Activated naive CD4-positive, alpha-beta T cell treated with anti-CD3 and anti-CD28 coated beads for 36 hours (primary cell): ENCODE measurements at regions of chr6 and their contacts with region 1.

Region 1: GRCh38 chr6:142146828-142147662 is at the starts of genes NMBR and VTA1:
- DNase-seq: peak; percentile 98
- H3K4me3 Mint-ChIP-seq: peak within 1 kb of the TSS; percentile 93
- H3K27ac Mint-ChIP-seq: peak within 1 kb of the TSS; percentile 91
- H3K4me1 Mint-ChIP-seq: peaks cover 53% of the 10 kb centered on the region
- H3K27me3 Mint-ChIP-seq: no peaks in the 10 kb centered on the region
- total RNA-seq, gene NMBR: not detected
- total RNA-seq, gene VTA1: 54.7 to 57.3 TPM

Region 2: DNA sequence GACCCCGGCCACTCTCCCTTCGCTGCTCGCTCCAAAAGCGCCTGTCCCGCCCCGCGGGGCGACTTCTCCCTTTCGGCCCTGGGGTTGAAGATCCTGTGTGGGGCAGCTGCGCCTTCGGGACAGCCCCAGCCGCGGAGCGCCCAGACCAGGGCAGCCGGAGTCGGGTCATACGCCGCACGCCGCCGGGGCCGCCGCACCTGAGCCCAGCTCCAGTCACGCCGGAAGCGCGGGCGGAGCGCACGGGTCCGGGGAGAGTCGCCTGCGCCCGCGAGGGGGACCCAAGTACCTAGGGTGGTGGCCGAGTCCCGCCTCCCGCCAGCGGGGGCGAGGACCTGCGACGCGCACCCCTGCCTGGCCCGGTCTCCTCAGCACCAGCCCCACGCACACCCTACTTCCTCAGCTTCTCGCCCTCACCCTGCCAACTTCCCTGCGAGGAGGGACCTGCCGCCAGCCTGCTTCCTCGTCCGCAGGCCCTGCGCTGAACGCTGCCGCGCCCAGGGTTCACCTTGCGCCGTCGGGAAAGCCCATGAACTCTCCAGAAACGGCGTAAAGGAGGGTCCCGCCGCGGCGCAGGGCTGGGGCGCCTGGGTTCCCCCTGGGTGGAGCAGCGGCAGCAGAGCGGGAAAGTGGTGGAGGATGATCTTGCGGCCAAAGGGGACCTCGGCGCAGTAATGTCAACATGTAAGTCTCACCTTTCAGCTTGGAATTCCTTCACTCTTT is 154.8 kb after region 1 on chr6 and contains the start of gene ADGRG6:
- CTCF ChIA-PET with region 1: no interaction called
- intact Hi-C with region 1: loop called (anchors 1 kb)
- DNase-seq: peak; percentile 60
- H3K4me3 Mint-ChIP-seq: peak within 1 kb of the TSS; percentile 82
- H3K27ac Mint-ChIP-seq: no peak within 1 kb of the TSS
- H3K4me1 Mint-ChIP-seq: peaks cover 3% of the 10 kb centered on the region
- H3K27me3 Mint-ChIP-seq: peaks cover 15% of the 10 kb centered on the region
- total RNA-seq, gene ADGRG6: 0.69 to 0.86 TPM

Region 3: GRCh38 chr6:142395768-142396231 is 248.8 kb after region 1 on chr6:
- CTCF ChIA-PET with region 1: no interaction called
- intact Hi-C with region 1: loop called (anchors 1 kb)
- DNase-seq: no peak
- H3K4me3 Mint-ChIP-seq: no peak overlapping the region
- H3K27ac Mint-ChIP-seq: no peak overlapping the region
- H3K4me1 Mint-ChIP-seq: peaks cover 33% of the 10 kb centered on the region
- H3K27me3 Mint-ChIP-seq: no peaks in the 10 kb centered on the region

Region 4: DNA sequence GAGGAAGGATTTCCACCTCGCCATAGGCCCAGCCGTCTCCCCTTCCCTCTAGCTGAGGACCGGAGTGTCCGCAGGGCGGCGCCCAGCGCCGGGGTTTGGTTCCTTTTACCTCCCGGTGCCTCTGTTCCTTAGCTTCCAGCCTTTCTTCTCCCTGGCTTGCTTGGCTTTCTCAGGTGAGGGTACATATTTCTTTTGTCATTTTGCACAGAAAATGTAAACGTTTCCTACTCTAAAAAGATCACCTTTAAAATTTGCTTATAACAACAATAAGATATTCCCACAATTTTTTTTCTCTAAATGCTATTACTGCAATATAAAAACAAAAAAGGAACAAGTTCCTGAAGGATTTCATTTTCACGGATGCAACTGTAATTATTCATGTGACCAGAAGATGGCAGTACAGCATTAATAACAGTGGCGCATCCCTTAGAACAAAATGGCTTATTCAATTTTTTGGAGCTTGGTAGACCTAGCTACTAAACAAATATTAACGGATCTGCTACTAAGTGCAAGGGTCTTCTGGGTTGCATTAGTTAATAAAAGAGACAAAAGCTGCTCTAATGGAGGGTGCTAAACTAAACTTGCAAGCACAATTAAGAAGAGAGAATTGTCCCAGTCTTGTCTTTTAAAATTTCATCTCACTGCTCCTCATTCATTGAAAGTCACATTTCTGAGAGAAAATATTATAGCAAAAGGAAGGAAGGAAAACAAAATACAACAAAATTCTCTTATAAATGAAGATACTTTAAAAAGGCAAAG is 327.7 kb after region 1 on chr6:
- CTCF ChIA-PET with region 1: interaction called, 4 read pairs
- intact Hi-C with region 1: loop called (anchors 2 kb)
- DNase-seq: peak; percentile 10
- H3K4me3 Mint-ChIP-seq: no peak overlapping the region
- H3K27ac Mint-ChIP-seq: no peak overlapping the region
- H3K4me1 Mint-ChIP-seq: peaks cover 11% of the 10 kb centered on the region
- H3K27me3 Mint-ChIP-seq: no peaks in the 10 kb centered on the region

Region 5: DNA sequence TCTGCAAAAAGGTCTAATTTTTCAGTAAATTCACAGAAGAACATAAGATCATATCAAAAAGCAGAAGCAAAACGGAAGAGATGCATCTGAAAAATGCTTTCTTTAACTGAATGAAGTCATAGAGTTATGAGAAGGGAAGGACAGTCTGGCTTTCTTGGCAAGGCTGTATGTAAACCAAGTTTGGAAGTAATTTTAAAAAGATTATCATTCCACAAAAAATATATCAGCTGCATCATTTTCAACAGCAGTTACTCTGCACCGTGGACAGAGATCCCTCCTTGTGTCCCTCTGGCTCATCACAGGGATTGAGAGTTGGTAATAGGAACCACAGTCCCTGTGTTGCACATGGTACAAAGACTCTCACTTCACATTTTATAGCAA is 539.5 kb after region 1 on chr6:
- CTCF ChIA-PET with region 1: no interaction called
- intact Hi-C with region 1: loop called (anchors 5 kb)
- DNase-seq: no peak
- H3K4me3 Mint-ChIP-seq: no peak overlapping the region
- H3K27ac Mint-ChIP-seq: no peak overlapping the region
- H3K4me1 Mint-ChIP-seq: peaks cover 32% of the 10 kb centered on the region
- H3K27me3 Mint-ChIP-seq: no peaks in the 10 kb centered on the region

Region 6: DNA sequence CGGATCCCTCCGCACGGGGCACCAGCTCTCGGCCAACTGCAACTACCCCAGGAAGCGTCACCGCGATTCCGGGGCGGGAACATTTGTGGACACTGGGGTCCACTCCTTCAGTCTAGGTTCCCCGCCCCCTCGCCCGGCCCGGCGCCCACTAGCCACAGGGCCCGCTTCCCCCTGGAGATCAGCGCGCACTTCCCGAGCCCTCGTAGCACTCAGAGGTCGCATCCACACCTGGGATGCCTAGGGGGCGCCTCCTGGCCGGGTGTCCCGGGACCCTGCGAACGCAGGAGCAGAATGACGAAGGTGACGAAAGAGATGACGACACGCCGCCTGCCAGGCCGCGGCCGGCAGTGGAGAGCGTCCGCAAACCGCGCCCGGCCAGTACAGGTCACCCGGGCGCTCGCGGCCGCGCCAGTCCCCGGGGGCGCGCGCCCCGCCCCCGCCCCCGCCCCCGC is 913.3 kb after region 1 on chr6:
- CTCF ChIA-PET with region 1: no interaction called
- intact Hi-C with region 1: loop called (anchors 5 kb)
- DNase-seq: peak; percentile 77
- H3K4me3 Mint-ChIP-seq: peak overlapping the region; percentile 81
- H3K27ac Mint-ChIP-seq: peak overlapping the region; percentile 90
- H3K4me1 Mint-ChIP-seq: peaks cover 28% of the 10 kb centered on the region
- H3K27me3 Mint-ChIP-seq: no peaks in the 10 kb centered on the region